ENCODE measurements at regions of chr2 and their contacts with region 1.

Region 1: GRCh38 chr2:108916796-108917421 is 72.1 kb downstream of the EDAR start:
- DNase-seq: no peak
- ATAC-seq: no peak

Region 2: GRCh38 chr2:108849331-108849730 is 67.6 kb before region 1 on chr2:
- intact Hi-C with region 1: loop called (anchors 2 kb)
- DNase-seq: no peak
- ATAC-seq: no peak